ENCODE measurements at regions of chr5 and their contacts with region 1.

Region 1: GRCh38 chr5:140075371-140075770 is 32.3 kb upstream of the NRG2 start:
- DNase-seq: no peak
- ATAC-seq: peak; percentile 33
- H3K4me3 ChIP-seq: no peak overlapping the region
- H3K27ac ChIP-seq: no peak overlapping the region
- H3K4me1 ChIP-seq: peaks cover 3% of the 10 kb centered on the region
- H3K27me3 ChIP-seq: no peaks in the 10 kb centered on the region
- CTCF ChIP-seq: peak in 5 of 7 experiments; percentile 22 to 59 (median 44)
- POLR2A ChIP-seq: no peak

Region 2: DNA sequence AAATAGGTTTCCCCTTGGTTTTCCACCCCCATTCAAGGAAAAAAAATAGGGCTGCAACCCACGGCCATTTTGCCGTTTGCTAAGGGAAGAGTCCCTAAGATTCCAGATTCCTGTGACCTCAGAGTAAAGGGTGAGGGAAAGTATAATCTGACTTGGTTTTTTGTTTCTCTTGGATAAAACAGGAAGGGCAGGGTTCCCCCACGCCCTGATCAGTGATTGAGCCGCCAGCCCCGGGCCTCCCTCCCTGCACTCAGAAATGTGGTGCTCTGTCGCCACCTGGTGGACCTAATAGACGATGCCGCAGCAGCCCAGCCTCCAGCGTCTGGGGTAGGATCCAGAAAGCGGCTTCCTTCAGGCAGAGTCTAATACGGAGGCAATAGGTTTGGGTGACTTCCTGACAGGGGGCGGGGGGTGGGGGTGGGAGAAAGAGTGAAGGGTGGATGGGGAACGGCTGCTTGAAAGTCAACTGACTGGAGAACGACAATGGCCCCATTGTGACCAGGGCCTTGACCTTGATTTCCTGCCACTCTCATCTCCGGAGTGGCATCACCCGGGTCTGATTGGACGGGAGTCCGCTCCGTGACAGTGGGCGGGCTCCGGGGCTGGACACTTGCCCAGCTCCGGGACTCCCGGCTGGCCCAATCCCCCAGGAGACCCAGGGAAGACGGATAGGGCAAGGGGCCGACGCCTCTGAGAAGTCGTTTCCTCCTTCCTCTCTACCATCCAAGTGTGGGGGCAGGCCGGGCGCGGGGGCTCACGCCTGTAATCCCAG is 81.8 kb after region 1 on chr5:
- intact Hi-C with region 1: loop called (anchors 5 kb)
- DNase-seq: peak; percentile 90 to 92 (median 90)
- ATAC-seq: peak; percentile 95
- H3K4me3 ChIP-seq: no peak overlapping the region
- H3K27ac ChIP-seq: peak overlapping the region; percentile 45 to 64 (median 61)
- H3K4me1 ChIP-seq: peaks cover 11% of the 10 kb centered on the region
- H3K27me3 ChIP-seq: no peaks in the 10 kb centered on the region
- CTCF ChIP-seq: peak; percentile 81 to 97 (median 95)
- POLR2A ChIP-seq: no peak

Region 3: GRCh38 chr5:140273401-140273877 is 198.1 kb after region 1 on chr5:
- intact Hi-C with region 1: no loop called
- DNase-seq: peak in 1 of 4 donors; percentile 64
- ATAC-seq: no peak
- H3K4me3 ChIP-seq: no peak overlapping the region
- H3K27ac ChIP-seq: peak overlapping the region in 1 of 4 donors; percentile 10
- H3K4me1 ChIP-seq: no peaks in the 10 kb centered on the region
- H3K27me3 ChIP-seq: no peaks in the 10 kb centered on the region
- CTCF ChIP-seq: no peak
- POLR2A ChIP-seq: no peak

Measured in body of pancreas (tissue), 4 donors.